Activated T-helper 1 cell treated with anti-CD3 and anti-CD28 coated beads, Interleukin-12 subunit alpha, Interleukin-12 subunit beta, Interleukin-2, Interleukin-4 antibody, amounts not matched to agents 30 ng/mL and 10 ng/mL and 1 ng/mL, durations not matched to agents 14 hours and 24 hours and 36 hours (primary cell): ENCODE measurements at regions of chr2 and their contacts with region 1.

Region 1: DNA sequence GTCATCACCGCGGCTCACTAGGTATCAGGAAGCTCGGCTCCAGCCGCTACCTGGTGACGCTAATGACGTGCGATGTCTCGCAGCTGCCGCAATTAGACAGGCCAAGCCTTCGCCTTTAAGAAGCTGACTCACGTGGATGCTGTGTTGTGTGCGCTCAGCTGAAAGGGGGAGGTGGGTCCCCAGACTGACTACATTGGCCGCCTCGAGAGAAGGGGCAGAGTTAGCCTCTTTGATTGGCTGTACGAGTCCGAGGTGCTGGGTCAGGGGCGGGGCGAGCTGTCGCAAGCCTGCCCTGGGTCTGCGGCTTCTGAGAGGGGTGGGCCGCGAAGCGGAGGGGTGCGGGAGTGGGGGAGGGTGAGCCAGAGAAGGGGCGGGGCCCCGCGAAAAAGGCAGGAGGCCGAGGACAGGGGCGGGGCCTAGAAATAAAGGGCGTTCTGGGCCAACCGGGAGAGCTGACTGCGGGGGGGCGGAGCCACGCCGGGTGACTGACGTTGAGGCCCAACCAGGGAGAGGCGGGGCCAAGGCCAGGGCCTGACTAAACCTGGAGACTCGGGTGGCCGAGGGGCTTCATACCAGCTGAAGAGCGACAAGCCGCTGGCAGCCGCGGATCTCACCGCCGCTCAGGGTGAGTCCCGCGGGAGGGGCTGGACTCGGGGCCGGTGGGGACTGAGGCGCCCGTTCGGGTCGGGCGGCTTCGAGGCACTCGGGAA is at the start of gene YPEL5:
- DNase-seq: peak; percentile 99
- H3K4me3 Mint-ChIP-seq: peak within 1 kb of the TSS; percentile 83
- H3K27ac Mint-ChIP-seq: peak within 1 kb of the TSS; percentile 95
- H3K4me1 Mint-ChIP-seq: peaks cover 41% of the 10 kb centered on the region
- H3K27me3 Mint-ChIP-seq: no peaks in the 10 kb centered on the region
- total RNA-seq, gene YPEL5: 25.1 and 27.3 TPM in 2 replicates

Region 2: DNA sequence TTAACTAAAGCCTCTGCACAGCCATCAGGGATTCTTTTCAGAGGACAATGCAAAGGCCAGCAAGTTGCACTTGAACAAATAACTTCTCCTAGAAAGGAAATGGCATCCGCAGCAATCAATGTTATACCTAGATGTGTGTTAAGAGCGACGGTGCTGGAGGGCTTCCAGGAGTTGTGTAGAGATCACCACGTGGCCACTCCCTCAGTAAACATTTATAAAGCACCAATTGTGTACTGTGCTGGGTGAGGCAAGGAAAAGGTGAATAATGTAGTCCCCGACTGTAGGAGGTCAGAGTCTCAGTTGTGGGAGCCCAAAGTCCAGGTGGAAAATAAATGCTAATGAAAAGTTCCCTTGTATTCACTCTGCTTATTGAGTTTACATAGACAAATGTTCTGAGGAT is 360.2 kb before region 1 on chr2:
- intact Hi-C with region 1: no loop called
- DNase-seq: no peak
- H3K4me3 Mint-ChIP-seq: no peak overlapping the region
- H3K27ac Mint-ChIP-seq: no peak overlapping the region
- H3K4me1 Mint-ChIP-seq: no peaks in the 10 kb centered on the region
- H3K27me3 Mint-ChIP-seq: no peaks in the 10 kb centered on the region

Region 3: DNA sequence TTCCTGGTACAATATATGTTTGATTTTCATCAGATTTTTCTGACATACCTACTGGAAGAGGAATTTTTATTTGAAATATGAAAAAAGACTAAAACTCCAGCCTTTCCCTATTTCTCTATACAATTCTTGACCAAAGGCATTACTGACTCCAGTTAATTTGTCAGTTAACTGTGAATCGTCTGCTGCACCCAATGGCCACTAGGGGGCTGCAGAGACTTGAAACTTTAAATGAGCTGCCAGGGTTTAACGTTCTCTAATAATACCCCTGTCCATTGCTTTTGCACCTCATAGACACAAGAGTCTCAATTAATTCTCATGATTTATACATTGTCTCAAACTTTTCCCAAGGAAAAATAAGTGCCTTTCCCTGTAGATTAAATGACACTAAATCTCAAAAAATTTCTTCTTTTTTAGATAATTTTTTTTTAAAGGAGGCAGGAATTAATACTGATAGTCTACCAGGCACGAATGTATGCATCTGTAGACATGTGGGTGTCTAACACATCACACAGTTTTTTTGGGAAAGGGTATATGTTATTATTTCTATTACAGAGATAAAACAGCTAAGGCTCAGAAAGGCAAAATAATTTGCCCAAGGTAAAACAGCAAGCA is 223.4 kb before region 1 on chr2:
- intact Hi-C with region 1: no loop called
- DNase-seq: peak; percentile 4
- H3K4me3 Mint-ChIP-seq: no peak overlapping the region
- H3K27ac Mint-ChIP-seq: no peak overlapping the region
- H3K4me1 Mint-ChIP-seq: no peaks in the 10 kb centered on the region
- H3K27me3 Mint-ChIP-seq: peaks cover 50% of the 10 kb centered on the region

Region 4: DNA sequence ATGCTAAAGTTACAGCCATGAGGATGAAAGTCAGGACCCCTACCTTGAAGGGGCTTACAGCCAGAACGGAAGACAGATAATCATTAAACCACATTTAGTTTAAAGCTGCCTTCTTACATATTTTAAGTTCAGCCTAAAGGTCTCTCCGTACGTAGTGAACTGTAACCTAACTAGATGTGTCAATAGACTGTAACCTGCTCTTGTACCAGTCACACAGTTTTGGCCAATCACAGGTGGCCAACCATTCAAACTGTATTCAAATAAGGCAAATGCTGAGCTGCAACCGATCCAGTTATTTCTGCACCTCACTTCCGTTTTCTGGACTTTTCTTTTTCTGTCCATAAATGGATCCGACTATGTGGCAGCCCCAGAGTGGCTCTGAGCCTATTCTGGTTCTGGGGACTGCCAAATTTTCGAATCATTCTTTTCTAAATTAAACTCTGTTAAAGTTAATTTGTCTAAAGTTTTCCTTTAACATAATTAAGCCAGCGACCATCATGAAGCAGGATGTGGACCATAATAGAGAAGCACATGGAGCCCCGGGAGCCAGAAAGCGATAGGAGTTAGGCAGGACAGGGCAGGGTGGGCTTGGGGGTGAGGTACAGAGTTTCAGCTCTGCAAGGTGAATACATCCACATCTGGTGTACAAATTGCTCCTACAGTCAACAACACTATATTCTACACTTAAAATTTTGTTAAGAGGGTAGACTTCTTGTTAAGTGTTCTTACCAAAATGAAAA is 48.2 kb before region 1 on chr2:
- intact Hi-C with region 1: loop called (anchors 5 kb)
- DNase-seq: no peak
- H3K4me3 Mint-ChIP-seq: no peak overlapping the region
- H3K27ac Mint-ChIP-seq: no peak overlapping the region
- H3K4me1 Mint-ChIP-seq: no peaks in the 10 kb centered on the region
- H3K27me3 Mint-ChIP-seq: peaks cover 23% of the 10 kb centered on the region

Region 5: DNA sequence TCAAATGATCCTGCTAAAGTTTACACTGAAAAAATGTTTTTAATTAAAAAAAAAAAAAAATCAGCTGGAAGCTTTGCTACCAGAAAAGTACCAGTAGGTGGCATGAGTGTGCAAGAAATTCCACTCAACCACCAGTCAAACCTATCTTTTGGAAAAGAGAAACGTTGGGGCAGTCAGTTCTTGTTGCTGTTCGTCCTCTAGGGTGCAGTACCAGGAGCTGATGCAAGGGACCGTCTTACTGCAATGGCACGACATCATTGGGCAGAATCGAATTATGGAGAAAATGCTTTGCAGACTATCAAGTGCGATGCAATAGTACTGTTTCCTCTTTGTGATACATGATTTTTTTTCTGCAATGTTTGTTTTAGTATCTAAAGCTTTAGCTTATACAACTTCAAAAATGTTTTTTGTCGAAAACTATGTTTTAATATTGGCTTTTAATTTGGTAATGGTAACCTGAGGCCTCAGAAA is 18.5 kb after region 1 on chr2:
- intact Hi-C with region 1: no loop called
- DNase-seq: peak; percentile 62
- H3K4me3 Mint-ChIP-seq: no peak overlapping the region
- H3K27ac Mint-ChIP-seq: no peak overlapping the region
- H3K4me1 Mint-ChIP-seq: peaks cover 5% of the 10 kb centered on the region
- H3K27me3 Mint-ChIP-seq: peaks cover 3% of the 10 kb centered on the region

Region 6: DNA sequence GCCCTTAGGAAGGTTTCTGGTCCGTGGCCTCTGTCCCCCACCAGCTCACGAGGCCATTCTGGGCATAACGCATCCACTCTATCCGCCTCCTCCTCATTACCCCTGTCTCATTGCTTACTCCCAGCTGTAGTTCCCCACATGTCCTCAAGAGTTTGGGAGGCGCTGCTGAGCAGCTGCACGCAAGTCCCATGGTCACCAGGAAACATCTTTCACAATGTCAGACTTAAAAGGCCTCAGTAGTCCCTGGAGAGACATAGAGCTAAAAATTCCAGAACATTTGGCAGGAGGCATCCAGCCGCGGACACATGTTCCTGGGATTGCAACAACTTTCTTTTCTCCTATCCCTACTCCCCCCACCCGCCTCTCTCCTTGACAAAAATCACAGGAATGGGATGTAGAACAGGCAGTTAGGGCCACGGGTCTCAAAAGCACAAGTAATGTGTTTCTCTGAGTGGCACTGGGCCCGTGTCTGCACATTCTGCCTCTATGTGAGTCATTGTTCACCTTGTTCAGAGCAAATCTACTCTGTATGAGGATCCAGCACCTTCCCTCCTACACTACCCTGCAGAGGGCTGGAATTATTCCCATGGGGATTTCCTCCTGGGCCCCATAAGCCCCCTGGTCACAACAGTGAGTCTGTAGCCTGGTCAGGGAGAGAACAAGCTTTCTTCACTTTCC is 92.9 kb after region 1 on chr2:
- intact Hi-C with region 1: loop called (anchors 1 kb)
- DNase-seq: peak; percentile 53
- H3K4me3 Mint-ChIP-seq: peak overlapping the region; percentile 61
- H3K27ac Mint-ChIP-seq: peak overlapping the region; percentile 86
- H3K4me1 Mint-ChIP-seq: peaks cover 75% of the 10 kb centered on the region
- H3K27me3 Mint-ChIP-seq: no peaks in the 10 kb centered on the region

Region 7: GRCh38 chr2:30336978-30337841 is 190.6 kb after region 1 on chr2:
- intact Hi-C with region 1: loop called (anchors 2 kb)
- DNase-seq: peak; percentile 60
- H3K4me3 Mint-ChIP-seq: peak overlapping the region; percentile 64
- H3K27ac Mint-ChIP-seq: peak overlapping the region; percentile 94
- H3K4me1 Mint-ChIP-seq: peaks cover 76% of the 10 kb centered on the region
- H3K27me3 Mint-ChIP-seq: no peaks in the 10 kb centered on the region

Region 8: DNA sequence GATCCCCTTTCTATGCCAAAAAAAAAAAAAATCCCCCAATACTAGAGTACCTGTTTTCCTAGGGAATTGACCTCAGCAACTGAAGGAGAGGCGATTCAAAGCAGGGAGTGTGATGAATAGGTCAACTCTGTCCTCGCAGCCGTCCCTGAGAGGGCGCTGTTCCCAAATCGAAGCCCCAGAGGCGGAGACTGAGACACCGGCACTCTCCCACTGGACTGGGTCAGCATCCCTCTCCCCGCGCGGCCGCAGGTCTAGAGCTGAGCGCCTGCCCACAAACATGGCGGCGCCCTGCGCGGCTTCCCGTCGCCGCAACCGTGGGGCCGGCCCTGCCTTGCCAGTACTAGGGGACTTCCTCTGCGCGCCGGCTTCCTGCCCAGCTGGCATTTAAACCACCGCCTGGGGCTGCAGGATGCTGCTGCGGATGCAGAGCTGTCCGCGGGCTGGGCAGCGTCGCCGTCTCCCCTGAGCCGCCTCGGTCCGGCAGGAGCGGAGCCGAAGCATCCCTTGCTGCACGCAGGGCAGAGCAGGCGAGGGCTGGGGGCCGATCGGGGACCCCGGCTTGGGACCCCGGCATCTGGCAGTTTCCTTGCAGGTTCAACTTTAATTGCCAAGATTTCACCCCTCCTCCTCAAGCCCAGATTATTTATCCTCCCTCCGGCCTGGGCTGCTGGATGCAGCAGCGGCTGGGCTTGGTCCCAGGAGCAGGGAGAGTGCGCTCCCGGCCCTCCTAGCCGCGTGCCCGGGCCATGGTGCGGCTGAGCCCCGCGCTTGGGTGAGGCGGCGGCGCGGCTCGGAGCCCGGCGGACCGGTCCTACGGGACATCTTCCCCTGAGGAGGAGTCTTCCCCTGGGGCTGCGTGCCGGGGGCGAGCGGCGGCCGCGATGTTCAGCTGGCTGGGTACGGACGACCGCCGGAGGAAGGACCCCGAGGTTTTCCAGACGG is 1087.4 kb after region 1 on chr2 and contains the start of gene EHD3:
- intact Hi-C with region 1: loop called (anchors 5 kb)
- DNase-seq: peak; percentile 77
- H3K4me3 Mint-ChIP-seq: peak within 1 kb of the TSS; percentile 75
- H3K27ac Mint-ChIP-seq: no peak within 1 kb of the TSS
- H3K4me1 Mint-ChIP-seq: peaks cover 12% of the 10 kb centered on the region
- H3K27me3 Mint-ChIP-seq: peaks cover 13% of the 10 kb centered on the region
- total RNA-seq, gene EHD3: 1.9 and 2.1 TPM in 2 replicates